HEK293 (cell line): ENCODE measurements at regions of chr6 and their contacts with region 1.

Region 1: GRCh38 chr6:170529839-170530469 is 23.2 kb downstream of the PSMB1 start:
- H3K4me3 ChIP-seq: no peak overlapping the region
- H3K27ac ChIP-seq: no peak overlapping the region
- H3K4me1 ChIP-seq: 0 out of 2 replicates have a peak, but pooled peaks cover 3% of the 10 kb centered on the region
- CTCF ChIP-seq: peak; percentile 64

Region 2: GRCh38 chr6:168892031-168892430 is 1637.9 kb before region 1 on chr6:
- CTCF ChIA-PET with region 1: interaction called, 12 read pairs
- POLR2A ChIA-PET with region 1: no interaction called
- H3K4me3 ChIP-seq: no peak overlapping the region
- H3K27ac ChIP-seq: no peak overlapping the region
- H3K4me1 ChIP-seq: no peaks in the 10 kb centered on the region
- CTCF ChIP-seq: no peak

Region 3: GRCh38 chr6:168956884-168957730 is 1572.8 kb before region 1 on chr6:
- CTCF ChIA-PET with region 1: interaction called, 18 read pairs
- POLR2A ChIA-PET with region 1: no interaction called
- H3K4me3 ChIP-seq: no peak overlapping the region
- H3K27ac ChIP-seq: no peak overlapping the region
- H3K4me1 ChIP-seq: no peaks in the 10 kb centered on the region
- CTCF ChIP-seq: peak; percentile 75

Region 4: DNA sequence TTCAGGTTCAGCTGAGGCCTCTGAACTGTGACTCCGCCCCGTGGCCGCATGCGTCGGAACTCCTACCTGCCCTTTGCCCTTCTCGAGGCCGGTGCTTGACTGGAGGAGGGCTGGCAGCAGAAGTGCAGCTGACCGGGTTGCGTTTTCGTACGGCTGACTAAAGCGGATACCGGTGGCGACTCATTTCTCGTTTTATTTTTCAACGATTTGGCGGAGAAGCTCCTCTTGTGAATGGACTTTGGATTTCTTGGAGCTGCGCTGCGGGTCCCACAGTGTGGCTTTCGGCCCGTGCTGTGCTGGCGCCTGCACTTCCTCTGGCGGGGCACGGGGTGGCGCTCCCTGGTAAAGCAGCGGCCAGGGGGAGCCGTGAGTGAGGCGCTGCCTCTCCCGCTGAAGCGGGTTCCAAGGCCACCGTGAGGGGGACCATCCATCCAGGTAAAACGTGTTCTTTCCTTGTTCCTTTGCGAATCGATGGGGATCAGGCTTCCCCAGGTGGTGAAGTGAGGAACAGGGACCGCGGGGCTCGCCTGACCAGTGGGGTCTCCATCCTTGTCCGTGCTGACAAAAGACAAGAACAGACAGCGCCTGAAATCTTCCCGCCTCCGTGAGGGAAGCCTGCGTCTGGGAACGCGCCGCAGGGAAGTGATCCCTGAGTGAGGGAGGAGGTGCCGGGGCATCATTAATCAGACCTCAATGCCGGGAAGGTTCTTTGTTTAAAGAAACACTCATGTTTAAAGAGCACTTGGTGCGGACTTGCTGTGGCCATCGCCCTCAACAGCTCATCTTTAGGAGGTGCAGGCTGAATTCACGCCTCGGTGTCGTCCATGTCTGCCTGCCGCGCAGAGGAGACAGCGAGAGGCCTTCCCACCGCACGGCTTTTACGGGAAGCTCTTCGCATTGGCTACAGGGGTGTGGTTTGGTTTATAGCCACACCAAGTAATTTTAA is 739.7 kb before region 1 on chr6:
- CTCF ChIA-PET with region 1: interaction called, 65 read pairs
- POLR2A ChIA-PET with region 1: no interaction called
- H3K4me3 ChIP-seq: peak overlapping the region; percentile 43
- H3K27ac ChIP-seq: no peak overlapping the region; the same call in 1 of the 2 replicates
- H3K4me1 ChIP-seq: 0 out of 2 replicates have a peak, but pooled peaks cover 5% of the 10 kb centered on the region
- CTCF ChIP-seq: peak; percentile 98

Region 5: DNA sequence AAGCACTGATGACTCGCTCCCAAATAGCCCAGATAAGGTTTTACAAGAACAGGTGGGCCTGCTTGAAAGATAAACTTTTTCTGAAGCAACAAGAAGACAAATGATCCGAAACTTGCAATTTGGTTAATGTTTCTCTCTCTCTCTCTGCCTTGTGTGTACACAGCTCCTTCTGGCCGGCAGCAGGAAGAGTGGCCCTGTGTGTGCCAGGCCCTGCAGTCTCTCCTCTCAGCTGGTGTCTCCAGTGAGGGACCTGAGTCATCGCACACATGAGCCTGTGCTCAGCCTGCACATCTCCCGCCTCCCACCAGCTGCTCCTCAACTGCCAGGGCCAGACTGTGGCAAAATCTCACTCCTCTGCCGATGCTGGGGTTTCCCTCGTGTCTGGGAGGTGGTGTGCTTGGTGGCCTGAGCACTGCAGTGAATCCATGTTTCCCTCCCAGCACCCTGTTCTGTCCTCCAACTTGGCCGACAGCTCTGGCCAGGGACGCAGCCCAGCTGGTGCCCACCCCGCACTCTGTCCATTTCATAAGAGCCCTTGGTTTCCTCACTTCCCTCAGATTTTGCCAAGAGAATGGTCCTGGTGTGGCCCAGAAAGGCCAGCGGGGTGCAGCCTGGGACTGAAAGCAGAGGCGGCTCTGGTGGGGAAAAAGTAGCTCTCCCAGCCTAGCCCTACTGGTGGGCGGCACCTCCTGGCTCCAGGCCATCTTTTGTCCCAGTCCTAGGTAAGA is 729.1 kb before region 1 on chr6:
- CTCF ChIA-PET with region 1: interaction called, 16 read pairs
- POLR2A ChIA-PET with region 1: no interaction called
- H3K4me3 ChIP-seq: no peak overlapping the region
- H3K27ac ChIP-seq: peak overlapping the region; percentile 59; the same call in 1 of the 2 replicates
- H3K4me1 ChIP-seq: peaks cover 19% of the 10 kb centered on the region
- CTCF ChIP-seq: no peak

Region 6: GRCh38 chr6:170516783-170517616 is 13.0 kb before region 1 on chr6:
- CTCF ChIA-PET with region 1: interaction called, 30 read pairs
- POLR2A ChIA-PET with region 1: no interaction called
- H3K4me3 ChIP-seq: no peak overlapping the region
- H3K27ac ChIP-seq: no peak overlapping the region
- H3K4me1 ChIP-seq: no peaks in the 10 kb centered on the region
- CTCF ChIP-seq: peak; percentile 61; the same call in 1 of the 2 replicates

Region 7: DNA sequence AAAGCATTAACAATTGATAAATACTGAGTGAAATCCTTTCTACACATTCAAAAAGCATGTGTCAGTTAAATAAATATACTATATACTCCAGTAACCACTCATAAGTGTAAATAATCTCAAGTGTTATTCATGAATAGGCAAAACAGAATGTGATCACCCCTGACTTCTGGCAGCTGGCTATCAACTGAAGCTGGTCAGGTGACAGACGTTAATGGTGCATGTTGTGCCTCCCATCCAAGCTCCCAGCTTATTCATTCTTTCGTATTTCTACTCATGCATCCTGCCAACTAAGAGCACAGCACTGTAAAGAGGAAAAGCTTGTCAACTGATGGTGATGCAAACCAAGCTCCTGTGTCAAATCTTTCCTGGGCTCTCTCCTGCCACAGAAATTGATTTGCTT is 15.5 kb after region 1 on chr6:
- CTCF ChIA-PET with region 1: interaction called, 28 read pairs
- POLR2A ChIA-PET with region 1: no interaction called
- H3K4me3 ChIP-seq: no peak overlapping the region
- H3K27ac ChIP-seq: no peak overlapping the region
- H3K4me1 ChIP-seq: no peaks in the 10 kb centered on the region
- CTCF ChIP-seq: no peak